Naive thymus-derived CD4-positive, alpha-beta T cell (primary cell): ENCODE measurements at regions of chr6 and their contacts with region 1.

Region 1: DNA sequence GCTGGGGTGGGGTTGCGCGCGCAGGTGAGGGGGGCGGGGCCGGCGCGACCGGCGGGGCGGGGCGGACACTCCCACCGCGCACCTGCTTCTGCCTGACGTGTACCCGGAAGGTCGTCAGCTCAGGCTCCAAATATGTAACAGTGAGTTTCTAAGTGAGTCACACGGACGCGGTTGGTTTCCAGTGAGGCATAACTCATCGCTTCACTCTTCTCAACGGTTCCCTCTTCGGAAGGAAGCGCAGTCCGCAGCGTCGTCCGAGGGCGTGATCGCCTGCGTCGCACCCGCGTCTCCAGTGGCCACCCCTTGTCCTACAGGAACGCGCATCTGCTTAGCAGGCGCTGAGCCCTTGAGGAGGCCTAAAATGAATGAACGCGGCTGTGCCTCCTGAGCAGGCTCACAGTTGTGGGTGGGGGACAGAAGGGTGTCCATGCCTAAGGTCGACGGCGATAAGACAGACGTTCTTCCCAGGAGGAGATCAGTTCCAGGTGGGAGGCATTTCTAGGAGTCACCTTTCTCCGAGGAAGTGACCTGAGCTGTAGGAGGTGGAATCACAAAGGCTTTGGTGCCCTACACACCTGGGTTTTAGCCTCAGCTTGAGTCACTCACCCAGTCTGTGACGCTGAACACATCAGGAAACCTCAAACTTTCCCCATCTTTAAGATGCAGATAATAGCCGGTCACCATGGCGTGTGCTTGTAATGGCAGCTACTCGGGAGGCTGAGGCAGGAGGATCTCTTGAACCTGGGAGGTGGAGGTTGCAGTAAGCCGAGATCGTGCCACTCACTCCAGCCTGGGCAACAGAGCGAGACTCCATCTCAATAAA is 50.9 kb upstream of the EZR start:
- DNase-seq: peak in 1 of 9 donors; percentile 97
- ATAC-seq: peak; percentile 87
- H3K4me3 ChIP-seq: peak overlapping the region; percentile 71
- H3K4me3 Mint-ChIP-seq: peak overlapping the region; percentile 83 to 96 (median 92)
- H3K27ac ChIP-seq: peak overlapping the region; percentile 98
- H3K27ac Mint-ChIP-seq: peak overlapping the region; percentile 98 to 100 (median 100)
- H3K4me1 ChIP-seq: peaks cover 16 to 18% of the 10 kb centered on the region in 2 donors
- H3K4me1 Mint-ChIP-seq: peaks cover 7 to 45% (median 25%) of the 10 kb centered on the region in 7 donors
- H3K27me3 ChIP-seq: no peaks in the 10 kb centered on the region
- H3K27me3 Mint-ChIP-seq: peaks cover 0 to 5% (median 0%) of the 10 kb centered on the region in 5 donors

Region 2: DNA sequence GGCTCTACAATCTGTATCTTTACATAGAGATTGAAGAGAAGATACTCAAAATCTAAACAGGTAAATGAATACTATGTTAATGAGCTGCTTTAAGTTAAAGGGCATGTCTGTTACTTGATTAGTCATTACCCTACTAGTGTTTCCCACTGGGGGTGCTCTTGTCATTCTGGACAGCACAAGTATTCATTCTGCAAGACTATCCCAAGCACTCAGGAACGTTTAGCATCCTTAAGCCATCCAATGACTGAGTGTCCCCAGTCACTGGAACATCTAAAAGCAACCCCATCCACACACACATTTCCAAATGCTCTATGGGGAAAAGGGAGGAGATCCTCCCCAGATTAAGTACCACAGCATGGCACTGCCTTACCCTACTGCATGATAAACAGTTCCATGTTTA is 76.6 kb before region 1 on chr6:
- CTCF ChIA-PET with region 1: interaction called, 7 read pairs
- POLR2A ChIA-PET with region 1: interaction called, 31 read pairs
- intact Hi-C with region 1: loop called (anchors 1 kb)
- DNase-seq: peak in 3 of 9 donors; percentile 29 to 39 (median 36)
- ATAC-seq: peak; percentile 56
- H3K4me3 ChIP-seq: no peak overlapping the region
- H3K4me3 Mint-ChIP-seq: peak overlapping the region in 1 of 10 donors; percentile 29
- H3K27ac ChIP-seq: no peak overlapping the region
- H3K27ac Mint-ChIP-seq: peak overlapping the region in 5 of 9 donors; percentile 25 to 82 (median 79)
- H3K4me1 ChIP-seq: peaks cover 19 to 77% of the 10 kb centered on the region in 2 donors
- H3K4me1 Mint-ChIP-seq: peaks cover 47 to 87% (median 80%) of the 10 kb centered on the region in 7 donors
- H3K27me3 ChIP-seq: no peaks in the 10 kb centered on the region
- H3K27me3 Mint-ChIP-seq: no peaks in the 10 kb centered on the region

Region 3: DNA sequence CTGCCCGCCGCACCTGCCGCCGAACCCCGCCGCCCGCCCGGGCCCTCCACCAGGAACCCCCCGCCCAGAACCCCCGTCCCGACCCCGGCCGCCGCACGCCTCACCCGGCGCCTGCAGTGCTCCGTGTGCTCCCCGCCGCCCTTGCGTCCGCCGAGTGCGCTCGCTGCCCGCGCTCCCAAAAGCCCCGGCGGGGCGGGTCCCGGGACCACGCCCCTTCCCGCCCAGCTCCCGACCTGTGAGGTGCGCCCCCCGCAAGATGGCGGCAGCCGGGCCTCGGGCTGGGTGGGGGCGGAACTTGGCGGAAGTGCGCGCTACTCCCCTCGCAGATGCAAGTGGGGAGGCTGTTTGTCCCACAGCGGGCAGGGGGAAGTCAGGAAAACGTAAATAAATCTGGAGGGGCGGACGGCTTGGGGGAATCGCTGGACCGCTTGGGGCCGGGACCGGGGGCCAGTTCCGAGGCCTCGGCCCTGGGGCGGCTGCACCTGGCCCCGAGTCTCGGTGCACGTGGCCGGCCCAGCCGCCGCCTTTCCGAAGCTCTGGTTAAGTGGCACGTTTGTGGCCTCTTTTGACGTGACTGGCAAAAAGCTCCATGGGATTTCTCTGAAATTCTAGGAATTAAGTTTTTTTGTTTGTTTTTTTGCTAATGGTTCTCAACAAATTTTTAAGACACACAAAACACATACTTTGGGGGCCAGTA is 50.7 kb before region 1 on chr6 and contains the start of gene EZR:
- CTCF ChIA-PET with region 1: interaction called, 3 read pairs
- POLR2A ChIA-PET with region 1: interaction called, 47 read pairs
- intact Hi-C with region 1: loop called (anchors 1 kb)
- DNase-seq: peak; percentile 70 to 85 (median 80)
- ATAC-seq: peak; percentile 80
- H3K4me3 ChIP-seq: peak within 1 kb of the TSS; percentile 50
- H3K4me3 Mint-ChIP-seq: peak within 1 kb of the TSS; percentile 81 to 97 (median 90)
- H3K27ac ChIP-seq: peak within 1 kb of the TSS; percentile 99
- H3K27ac Mint-ChIP-seq: peak within 1 kb of the TSS; percentile 89 to 97 (median 91)
- H3K4me1 ChIP-seq: peaks cover 21 to 24% of the 10 kb centered on the region in 2 donors
- H3K4me1 Mint-ChIP-seq: peaks cover 30 to 47% (median 36%) of the 10 kb centered on the region in 7 donors
- H3K27me3 ChIP-seq: no peaks in the 10 kb centered on the region
- H3K27me3 Mint-ChIP-seq: no peaks in the 10 kb centered on the region
- total RNA-seq, gene EZR: 132 to 201 (median 163) TPM

Region 4: GRCh38 chr6:158853072-158853871 is 16.8 kb before region 1 on chr6:
- CTCF ChIA-PET with region 1: interaction called, 9 read pairs
- POLR2A ChIA-PET with region 1: interaction called, 219 read pairs
- intact Hi-C with region 1: loop called (anchors 1 kb)
- DNase-seq: peak; percentile 54 to 93 (median 86)
- ATAC-seq: peak; percentile 79
- H3K4me3 ChIP-seq: peak overlapping the region; percentile 55
- H3K4me3 Mint-ChIP-seq: no peak overlapping the region
- H3K27ac ChIP-seq: peak overlapping the region; percentile 83
- H3K27ac Mint-ChIP-seq: no peak overlapping the region
- H3K4me1 ChIP-seq: peaks cover 47 to 55% of the 10 kb centered on the region in 2 donors
- H3K4me1 Mint-ChIP-seq: peaks cover 16 to 42% (median 33%) of the 10 kb centered on the region in 7 donors
- H3K27me3 ChIP-seq: no peaks in the 10 kb centered on the region
- H3K27me3 Mint-ChIP-seq: no peaks in the 10 kb centered on the region

Region 5: GRCh38 chr6:158999666-159000403 is 129.8 kb after region 1 on chr6 and contains the start of gene RSPH3:
- CTCF ChIA-PET with region 1: no interaction called
- POLR2A ChIA-PET with region 1: no interaction called
- intact Hi-C with region 1: loop called in 1 of 2 experiments (anchors 1 kb)
- DNase-seq: peak; percentile 64 to 93 (median 81)
- ATAC-seq: peak; percentile 93
- H3K4me3 ChIP-seq: peak within 1 kb of the TSS; percentile 97
- H3K4me3 Mint-ChIP-seq: peak within 1 kb of the TSS; percentile 88 to 99 (median 98)
- H3K27ac ChIP-seq: peak within 1 kb of the TSS; percentile 76
- H3K27ac Mint-ChIP-seq: peak within 1 kb of the TSS; percentile 58 to 95 (median 90)
- H3K4me1 ChIP-seq: peaks cover 7 to 16% of the 10 kb centered on the region in 2 donors
- H3K4me1 Mint-ChIP-seq: peaks cover 16 to 35% (median 26%) of the 10 kb centered on the region in 7 donors
- H3K27me3 ChIP-seq: no peaks in the 10 kb centered on the region
- H3K27me3 Mint-ChIP-seq: no peaks in the 10 kb centered on the region
- total RNA-seq, gene RSPH3: 1.3 to 3.6 (median 2.7) TPM